Motor neuron (in vitro differentiated cells): ENCODE measurements at regions of chr3 and their contacts with region 1.

Region 1: DNA sequence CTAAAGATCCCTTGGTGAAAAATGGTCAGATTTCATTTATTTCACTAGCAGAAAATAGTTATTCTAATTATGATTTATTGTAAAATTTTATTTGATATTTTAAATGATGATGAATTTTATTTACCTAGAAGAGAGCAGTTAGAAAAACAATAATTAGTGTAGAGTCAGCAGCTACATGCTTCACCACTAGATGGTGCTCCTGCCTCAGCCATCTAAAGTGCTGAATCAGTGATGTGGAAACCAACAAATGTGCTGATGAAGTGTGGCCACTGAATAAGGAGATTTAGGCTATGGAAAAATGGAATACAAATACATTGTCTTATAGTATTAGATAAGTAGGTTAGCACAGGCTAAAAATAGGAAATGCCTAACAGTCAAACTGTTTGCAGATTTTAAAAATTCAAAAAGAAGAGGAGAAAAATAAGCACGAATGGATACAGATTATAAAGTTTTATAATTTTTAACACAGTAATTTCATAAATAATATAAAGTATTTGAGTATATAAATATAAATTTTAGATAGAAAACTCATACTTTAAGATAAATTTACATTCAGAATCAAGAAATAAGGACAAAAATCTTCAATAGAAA is 109.8 kb downstream of the PPP2R3A start:
- ATAC-seq: peak; percentile 34 to 75 (median 68)
- H3K4me3 ChIP-seq: no peak overlapping the region
- H3K27ac ChIP-seq: no peak overlapping the region
- H3K4me1 ChIP-seq: no peaks in the 10 kb centered on the region

Region 2: DNA sequence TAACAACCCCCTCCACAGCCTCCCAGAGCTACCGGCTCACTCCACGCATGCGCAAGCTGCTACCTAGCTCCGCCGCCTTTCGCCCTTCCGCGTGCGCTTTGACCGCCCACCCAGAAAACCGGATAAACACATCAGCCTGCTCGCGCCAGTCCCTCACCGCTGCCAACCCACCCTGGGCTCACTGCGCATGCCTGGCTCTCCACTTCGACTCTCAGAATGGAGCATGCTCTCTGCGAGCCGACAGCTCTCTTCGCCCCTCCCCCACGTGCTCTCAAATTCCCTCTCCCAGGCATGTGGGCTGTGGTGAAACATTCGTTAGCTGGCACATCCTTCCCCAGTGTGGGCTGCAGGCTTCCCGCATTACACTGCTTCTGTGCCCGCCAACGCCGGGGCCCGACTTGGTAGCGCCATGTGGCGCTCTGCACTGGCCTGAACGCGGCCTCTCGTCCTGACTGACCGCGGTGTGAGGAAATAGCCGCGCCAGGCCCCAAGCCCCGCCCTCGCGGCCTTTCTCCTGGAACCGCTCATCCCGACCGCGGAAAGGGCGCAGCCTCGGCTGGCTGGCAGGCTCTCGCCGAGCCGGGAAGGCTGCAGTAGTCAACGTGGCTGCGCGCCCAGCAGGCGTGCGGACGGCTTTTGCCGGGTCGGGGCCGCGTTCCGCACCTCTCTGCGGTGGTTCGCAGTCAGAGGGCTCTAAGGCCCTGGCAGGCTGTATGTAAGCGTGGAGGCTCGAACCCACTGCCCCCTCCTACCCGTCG is 121.3 kb after region 1 on chr3:
- in situ Hi-C with region 1: loop called in 1 of 9 experiments (anchors 25 kb)
- ATAC-seq: peak; percentile 69 to 88 (median 84)
- H3K4me3 ChIP-seq: peak overlapping the region; percentile 71 to 95 (median 88)
- H3K27ac ChIP-seq: peak overlapping the region; percentile 98 to 100
- H3K4me1 ChIP-seq: peaks cover 13 to 19% of the 10 kb centered on the region in 2 donors

Region 3: DNA sequence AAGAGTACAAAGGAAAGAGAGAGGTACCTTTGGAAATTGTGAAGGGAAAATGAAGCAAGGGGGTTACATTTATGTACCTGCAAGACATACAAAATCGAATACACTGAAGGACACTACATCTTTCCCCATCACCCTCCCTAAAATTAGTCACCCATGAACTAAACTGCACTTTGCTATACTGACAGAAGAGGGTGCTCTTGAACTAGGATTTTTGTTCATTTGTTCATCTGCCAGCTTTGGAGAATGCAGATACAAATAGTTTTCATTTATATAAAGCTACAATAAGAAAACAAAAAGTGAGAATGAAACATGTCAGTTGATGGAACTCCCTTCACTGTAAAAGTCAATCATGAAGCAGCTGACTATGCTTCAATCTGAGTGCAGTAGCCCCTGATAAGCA is 230.6 kb after region 1 on chr3:
- in situ Hi-C with region 1: no loop called
- ATAC-seq: peak in 2 of 8 experiments; percentile 32 to 37
- H3K4me3 ChIP-seq: no peak overlapping the region
- H3K27ac ChIP-seq: no peak overlapping the region
- H3K4me1 ChIP-seq: no peaks in the 10 kb centered on the region

Region 4: DNA sequence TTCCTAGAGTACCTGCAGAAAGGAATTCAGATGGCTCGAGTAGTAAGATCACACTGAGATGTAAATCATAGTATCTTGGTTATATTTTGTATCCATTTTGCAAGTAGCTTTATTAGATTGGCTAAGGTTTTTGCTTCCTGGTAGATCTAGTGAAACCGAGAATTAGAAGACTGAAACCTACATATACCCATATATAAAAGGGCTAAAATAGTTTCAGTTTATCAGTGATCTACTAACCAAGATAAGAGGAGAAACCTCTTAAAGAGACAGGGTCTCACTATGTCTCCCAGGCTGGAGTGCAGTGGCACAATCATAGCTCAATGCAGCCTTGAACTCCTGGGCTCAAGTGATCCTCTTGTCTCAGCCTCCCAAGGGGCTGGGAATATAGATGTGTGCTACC is 310.1 kb after region 1 on chr3:
- in situ Hi-C with region 1: loop called in 2 of 9 experiments (anchors 25 kb)
- ATAC-seq: no peak
- H3K4me3 ChIP-seq: no peak overlapping the region
- H3K27ac ChIP-seq: no peak overlapping the region
- H3K4me1 ChIP-seq: no peaks in the 10 kb centered on the region

Region 5: GRCh38 chr3:136728918-136729317 is 653.6 kb after region 1 on chr3:
- in situ Hi-C with region 1: loop called in 3 of 9 experiments (anchors 25 kb)
- ATAC-seq: peak; percentile 52 to 87 (median 71)
- H3K4me3 ChIP-seq: no peak overlapping the region
- H3K27ac ChIP-seq: no peak overlapping the region
- H3K4me1 ChIP-seq: no peaks in the 10 kb centered on the region

Region 6: DNA sequence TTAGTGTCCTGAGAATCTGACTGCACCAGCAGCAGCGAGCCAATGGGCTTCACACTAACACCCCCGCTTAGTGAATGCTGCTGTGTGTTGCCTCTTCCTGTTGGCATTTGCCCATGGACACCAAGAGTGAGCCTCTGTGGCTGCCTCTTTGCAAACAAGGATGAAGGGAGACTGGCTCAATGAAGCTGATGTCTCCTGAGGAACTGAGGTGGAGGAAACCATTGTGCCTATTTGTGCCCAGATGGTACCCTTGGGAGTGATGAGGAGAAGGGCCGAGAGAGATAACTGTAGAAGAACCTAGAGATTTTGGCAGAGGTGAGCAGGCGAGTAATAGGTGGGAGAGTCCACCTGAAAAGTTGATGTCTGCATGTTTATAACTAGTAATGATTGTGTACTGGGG is 933.7 kb after region 1 on chr3:
- in situ Hi-C with region 1: loop called in 6 of 9 experiments (anchors 10 to 25 kb)
- ATAC-seq: no peak
- H3K4me3 ChIP-seq: no peak overlapping the region
- H3K27ac ChIP-seq: no peak overlapping the region
- H3K4me1 ChIP-seq: no peaks in the 10 kb centered on the region

Region 7: DNA sequence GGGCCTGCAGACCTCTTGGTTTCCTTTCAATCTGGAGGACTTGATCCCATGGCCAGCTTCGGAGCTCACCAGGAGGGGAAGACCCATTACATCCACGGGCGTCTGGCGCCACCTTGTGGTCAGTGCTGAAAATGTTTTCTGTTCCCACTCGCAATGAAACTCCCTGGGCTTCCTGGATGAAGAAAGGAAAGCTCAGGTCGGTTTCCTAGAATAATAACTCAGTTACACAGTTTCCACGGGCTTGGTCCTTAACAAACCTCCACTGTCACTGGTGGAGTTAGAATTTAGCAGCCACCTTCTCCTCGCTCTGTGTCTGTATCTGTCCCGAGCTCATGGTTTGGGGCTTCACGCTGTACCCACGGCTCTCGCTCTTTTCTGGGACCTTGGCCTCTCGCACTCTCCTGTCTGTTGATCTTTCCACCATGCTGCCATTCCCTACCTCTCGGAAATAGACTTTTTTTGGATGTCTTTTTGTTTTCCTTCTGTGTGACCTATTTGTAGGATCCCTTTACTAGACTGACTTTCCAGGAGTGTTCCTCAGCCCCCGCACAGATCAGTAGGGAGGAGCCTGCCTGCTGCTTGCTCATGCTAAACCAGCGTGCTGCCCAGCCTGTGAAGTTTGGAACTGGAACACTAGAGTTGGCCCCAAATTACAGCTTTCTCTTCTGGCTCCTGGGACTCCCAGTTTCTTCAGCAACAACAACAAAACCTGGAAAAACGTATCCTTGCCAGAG is 938.8 kb after region 1 on chr3:
- in situ Hi-C with region 1: loop called in 6 of 9 experiments (anchors 10 to 25 kb)
- ATAC-seq: peak; percentile 92 to 99 (median 98)
- H3K4me3 ChIP-seq: peak overlapping the region in 1 of 5 donors; percentile 8
- H3K27ac ChIP-seq: no peak overlapping the region
- H3K4me1 ChIP-seq: no peaks in the 10 kb centered on the region